ENCODE measurements at regions of chr20 and their contacts with region 1.

Region 1: DNA sequence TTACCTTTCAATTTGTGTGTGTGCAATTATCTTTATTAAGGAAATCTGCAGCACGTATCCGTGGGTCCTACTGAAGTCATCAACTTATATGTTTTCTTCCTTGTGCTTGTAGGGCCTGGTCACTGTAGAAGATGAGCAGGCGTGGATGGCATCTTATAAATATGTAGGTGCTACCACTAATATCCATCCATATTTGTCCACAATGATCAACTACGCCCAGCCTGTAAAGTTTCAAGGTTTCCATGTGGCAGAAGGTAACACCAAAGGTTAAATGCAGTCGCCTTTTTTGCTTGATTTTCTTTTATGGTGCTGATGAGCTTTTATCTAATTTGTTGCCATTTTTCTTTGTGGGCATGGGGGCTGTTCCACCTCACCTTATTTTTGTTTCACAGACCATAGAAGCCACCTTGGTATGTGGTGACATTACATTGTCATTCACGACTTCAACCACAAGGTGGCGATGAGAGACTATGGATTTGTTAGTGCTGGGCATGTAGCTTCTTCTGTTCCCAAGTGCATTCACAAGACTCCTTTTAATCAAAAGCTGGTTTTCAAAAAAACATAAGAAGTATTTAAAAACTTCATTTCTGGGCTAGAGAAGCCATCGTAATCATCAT is 106.5 kb upstream of the LAMP5 start:
- DNase-seq: peak; percentile 57
- H3K4me3 ChIP-seq: no peak overlapping the region; a peak in 1 of 4 replicates
- H3K27ac ChIP-seq: peak overlapping the region; percentile 81 to 88; a peak in 3 of 4 replicates
- H3K4me1 ChIP-seq: peaks cover 2 to 19% of the 10 kb centered on the region in 2 experiments; a peak in 1 of 4 replicates
- H3K27me3 ChIP-seq: no peaks in the 10 kb centered on the region
- CTCF ChIP-seq: peak; percentile 87
- EP300 ChIP-seq: no peak
- RAD21 ChIP-seq: peak; percentile 98

Region 2: GRCh38 chr20:9270831-9271230 is 137.1 kb before region 1 on chr20:
- CTCF ChIA-PET with region 1: no interaction called
- POLR2A ChIA-PET with region 1: no interaction called
- DNase-seq: no peak
- H3K4me3 ChIP-seq: no peak overlapping the region
- H3K27ac ChIP-seq: peak overlapping the region; percentile 77
- H3K4me1 ChIP-seq: peaks cover 3 to 17% of the 10 kb centered on the region in 2 experiments; a peak in 1 of 4 replicates
- H3K27me3 ChIP-seq: no peaks in the 10 kb centered on the region
- CTCF ChIP-seq: no peak
- EP300 ChIP-seq: peak in 1 of 2 experiments; percentile 34; a peak in 1 of 4 replicates
- RAD21 ChIP-seq: no peak

Region 3: DNA sequence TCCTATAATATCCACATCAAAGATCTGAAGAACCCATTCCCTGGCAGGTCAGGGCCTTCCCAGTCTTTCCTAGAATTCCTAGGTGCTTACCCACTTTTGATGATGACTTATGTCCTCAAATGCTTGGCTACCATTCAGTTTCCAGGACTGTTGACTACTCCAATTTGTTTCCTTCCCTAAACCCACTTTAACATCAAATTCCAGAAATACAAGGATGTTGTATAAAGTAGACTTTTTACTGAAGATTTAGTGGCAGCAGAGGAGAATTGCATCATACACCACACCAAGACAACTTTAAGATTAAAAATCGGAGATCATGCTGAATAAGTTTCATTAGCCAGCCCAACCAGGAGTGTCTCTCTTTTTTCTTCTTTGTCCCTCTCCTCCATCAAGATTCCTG is 96.8 kb before region 1 on chr20:
- CTCF ChIA-PET with region 1: no interaction called
- POLR2A ChIA-PET with region 1: no interaction called
- DNase-seq: no peak
- H3K4me3 ChIP-seq: no peak overlapping the region
- H3K27ac ChIP-seq: peak overlapping the region; percentile 46 to 76; a peak in 3 of 4 replicates
- H3K4me1 ChIP-seq: peaks cover 0 to 9% of the 10 kb centered on the region in 2 experiments; a peak in 2 of 4 replicates
- H3K27me3 ChIP-seq: no peaks in the 10 kb centered on the region
- CTCF ChIP-seq: no peak
- EP300 ChIP-seq: no peak
- RAD21 ChIP-seq: no peak

Region 4: GRCh38 chr20:9447182-9447581 is 39.3 kb after region 1 on chr20:
- CTCF ChIA-PET with region 1: interaction called, 10 read pairs
- POLR2A ChIA-PET with region 1: no interaction called
- DNase-seq: no peak
- H3K4me3 ChIP-seq: no peak overlapping the region
- H3K27ac ChIP-seq: no peak overlapping the region
- H3K4me1 ChIP-seq: peaks cover 0 to 3% of the 10 kb centered on the region in 2 experiments; a peak in 2 of 4 replicates
- H3K27me3 ChIP-seq: no peaks in the 10 kb centered on the region
- CTCF ChIP-seq: no peak
- EP300 ChIP-seq: no peak
- RAD21 ChIP-seq: no peak

Region 5: GRCh38 chr20:9474835-9475415 is 67.0 kb after region 1 on chr20:
- CTCF ChIA-PET with region 1: interaction called, 23 read pairs
- POLR2A ChIA-PET with region 1: no interaction called
- DNase-seq: no peak
- H3K4me3 ChIP-seq: no peak overlapping the region
- H3K27ac ChIP-seq: peak overlapping the region; percentile 43 to 71
- H3K4me1 ChIP-seq: peaks cover 11 to 18% of the 10 kb centered on the region in 2 experiments; a peak in 3 of 4 replicates
- H3K27me3 ChIP-seq: no peaks in the 10 kb centered on the region
- CTCF ChIP-seq: no peak
- EP300 ChIP-seq: no peak
- RAD21 ChIP-seq: no peak

Region 6: GRCh38 chr20:9573335-9574121 is 165.6 kb after region 1 on chr20:
- CTCF ChIA-PET with region 1: interaction called, 14 read pairs
- POLR2A ChIA-PET with region 1: no interaction called
- DNase-seq: peak; percentile 26
- H3K4me3 ChIP-seq: no peak overlapping the region
- H3K27ac ChIP-seq: no peak overlapping the region; a peak in 1 of 4 replicates
- H3K4me1 ChIP-seq: peaks cover 0 to 31% of the 10 kb centered on the region in 2 experiments; a peak in 2 of 4 replicates
- H3K27me3 ChIP-seq: no peaks in the 10 kb centered on the region
- CTCF ChIP-seq: no peak
- EP300 ChIP-seq: no peak
- RAD21 ChIP-seq: no peak

Region 7: DNA sequence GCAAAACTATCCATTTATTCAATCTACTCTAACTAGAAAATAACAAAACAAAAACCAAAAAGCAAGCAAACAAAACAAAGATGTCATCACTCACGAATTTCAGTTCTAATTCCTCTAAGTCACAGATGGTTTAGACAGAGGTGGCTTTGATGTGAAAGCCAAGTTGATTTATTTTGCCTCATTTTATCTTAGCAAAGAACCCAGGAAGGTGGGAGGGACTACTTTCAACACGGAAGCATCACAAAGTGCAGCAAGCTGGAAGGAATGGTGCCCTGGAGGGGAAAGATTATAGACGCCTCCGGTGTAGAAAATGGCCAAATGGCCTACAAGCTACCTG is 194.9 kb after region 1 on chr20:
- CTCF ChIA-PET with region 1: interaction called, 255 read pairs
- POLR2A ChIA-PET with region 1: no interaction called
- DNase-seq: no peak
- H3K4me3 ChIP-seq: no peak overlapping the region
- H3K27ac ChIP-seq: no peak overlapping the region
- H3K4me1 ChIP-seq: peaks cover 0 to 5% of the 10 kb centered on the region in 2 experiments; a peak in 1 of 4 replicates
- H3K27me3 ChIP-seq: no peaks in the 10 kb centered on the region
- CTCF ChIP-seq: no peak
- EP300 ChIP-seq: no peak
- RAD21 ChIP-seq: no peak

Region 8: GRCh38 chr20:9912858-9913434 is 505.0 kb after region 1 on chr20:
- CTCF ChIA-PET with region 1: interaction called, 22 read pairs
- POLR2A ChIA-PET with region 1: no interaction called
- DNase-seq: peak; percentile 50
- H3K4me3 ChIP-seq: no peak overlapping the region
- H3K27ac ChIP-seq: no peak overlapping the region; a peak in 1 of 4 replicates
- H3K4me1 ChIP-seq: no peaks in the 10 kb centered on the region
- H3K27me3 ChIP-seq: peaks cover 2% of the 10 kb centered on the region; the same call in 1 of the 2 replicates
- CTCF ChIP-seq: peak; percentile 97
- EP300 ChIP-seq: no peak
- RAD21 ChIP-seq: peak; percentile 67

Measured in SK-N-SH (cell line).